ENCODE measurements at regions of chr5 and their contacts with region 1.

Region 1: DNA sequence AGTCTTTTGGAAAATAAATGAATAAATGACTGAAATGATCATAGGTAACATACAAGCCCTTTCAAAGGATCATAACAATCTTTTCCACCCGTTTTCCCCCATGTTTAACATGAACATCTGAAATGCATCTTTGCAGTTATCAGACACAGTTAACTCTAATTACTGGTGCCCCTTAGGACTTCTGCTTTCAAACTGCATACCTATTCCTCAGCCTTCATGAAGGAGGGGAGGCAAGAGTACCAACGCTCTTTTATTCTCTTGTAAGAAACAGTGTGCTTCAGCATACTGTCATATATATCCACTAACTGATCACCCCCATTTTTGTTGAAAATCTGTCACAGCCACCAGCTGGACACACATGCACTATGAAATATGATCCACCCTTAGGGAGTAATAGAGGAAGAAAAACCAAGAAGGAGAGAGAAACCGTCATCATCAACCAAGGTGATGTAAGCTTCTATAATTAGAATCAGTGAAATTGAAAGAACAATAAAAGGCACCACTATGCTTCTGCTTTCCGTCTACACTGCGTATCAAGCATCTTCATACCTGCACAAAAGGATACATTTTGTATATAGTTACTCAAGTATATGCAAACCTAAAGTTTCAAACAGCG is 98.7 kb downstream of the RAPGEF6 start:
- DNase-seq: peak in 2 of 5 donors; percentile 35 to 45
- H3K4me3 ChIP-seq: no peak overlapping the region
- H3K4me3 Mint-ChIP-seq: peak overlapping the region in 7 of 8 donors; percentile 39 to 83 (median 69)
- H3K27ac ChIP-seq: peak overlapping the region; percentile 35
- H3K27ac Mint-ChIP-seq: peak overlapping the region; percentile 66 to 96 (median 81)
- H3K4me1 ChIP-seq: peaks cover 93% of the 10 kb centered on the region
- H3K4me1 Mint-ChIP-seq: peaks cover 64 to 85% (median 73%) of the 10 kb centered on the region in 4 donors
- H3K27me3 ChIP-seq: no peaks in the 10 kb centered on the region
- H3K27me3 Mint-ChIP-seq: no peaks in the 10 kb centered on the region

Region 2: GRCh38 chr5:131514316-131515283 is 21.7 kb before region 1 on chr5:
- CTCF ChIA-PET with region 1: interaction called, 20 read pairs
- POLR2A ChIA-PET with region 1: interaction called, 39 read pairs
- intact Hi-C with region 1: loop called (anchors 1 kb)
- DNase-seq: peak; percentile 67 to 79 (median 72)
- H3K4me3 ChIP-seq: peak overlapping the region; percentile 7 to 37
- H3K4me3 Mint-ChIP-seq: peak overlapping the region; percentile 79 to 92 (median 88)
- H3K27ac ChIP-seq: peak overlapping the region; percentile 61
- H3K27ac Mint-ChIP-seq: peak overlapping the region; percentile 81 to 98 (median 93)
- H3K4me1 ChIP-seq: peaks cover 60% of the 10 kb centered on the region
- H3K4me1 Mint-ChIP-seq: peaks cover 43 to 72% (median 53%) of the 10 kb centered on the region in 4 donors
- H3K27me3 ChIP-seq: no peaks in the 10 kb centered on the region
- H3K27me3 Mint-ChIP-seq: no peaks in the 10 kb centered on the region

Region 3: DNA sequence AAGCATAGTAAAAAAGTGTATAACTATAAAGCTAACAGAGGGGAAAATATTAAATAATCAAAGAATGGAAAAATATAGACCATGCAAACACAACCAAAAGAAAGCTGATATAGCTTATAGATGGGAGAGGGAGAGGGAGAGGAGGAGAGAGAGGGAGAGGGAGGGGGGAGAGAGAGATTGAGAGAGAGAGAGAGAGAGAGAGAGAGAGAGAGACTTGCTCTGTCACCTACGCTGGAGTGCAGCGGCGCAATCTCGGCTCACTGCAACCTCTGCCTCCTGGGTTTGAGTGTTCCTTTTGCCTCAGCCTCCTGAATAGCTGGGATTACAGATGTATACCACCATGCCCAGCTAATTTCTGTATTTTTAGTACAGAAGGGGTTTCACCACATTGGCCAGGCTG is 11.9 kb before region 1 on chr5:
- CTCF ChIA-PET with region 1: interaction called, 4 read pairs
- POLR2A ChIA-PET with region 1: interaction called, 13 read pairs
- intact Hi-C with region 1: no loop called
- DNase-seq: no peak
- H3K4me3 ChIP-seq: no peak overlapping the region
- H3K4me3 Mint-ChIP-seq: peak overlapping the region in 1 of 8 donors; percentile 26
- H3K27ac ChIP-seq: no peak overlapping the region
- H3K27ac Mint-ChIP-seq: peak overlapping the region in 2 of 7 donors; percentile 8 to 12
- H3K4me1 ChIP-seq: peaks cover 68% of the 10 kb centered on the region
- H3K4me1 Mint-ChIP-seq: peaks cover 51 to 77% (median 65%) of the 10 kb centered on the region in 4 donors
- H3K27me3 ChIP-seq: no peaks in the 10 kb centered on the region
- H3K27me3 Mint-ChIP-seq: no peaks in the 10 kb centered on the region

Region 4: DNA sequence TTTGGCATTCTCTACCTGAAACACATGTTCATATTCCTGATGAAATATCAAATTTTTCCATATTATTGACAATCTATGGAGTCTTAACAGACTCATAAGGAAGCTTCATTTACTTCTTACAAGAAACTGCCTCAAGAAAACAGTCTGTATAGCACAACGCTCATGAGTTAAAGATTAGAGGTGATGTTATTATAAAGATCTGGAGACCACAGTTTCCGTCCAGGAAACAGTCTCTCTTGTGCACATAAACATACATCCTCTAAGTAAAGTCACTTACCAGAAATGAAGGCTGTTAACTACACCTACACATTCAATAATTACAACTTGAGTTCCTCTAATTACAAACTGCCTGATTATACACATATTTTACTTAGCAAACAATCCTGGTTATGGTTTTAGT is 11.9 kb after region 1 on chr5:
- CTCF ChIA-PET with region 1: interaction called, 38 read pairs
- POLR2A ChIA-PET with region 1: interaction called, 75 read pairs
- intact Hi-C with region 1: loop called (anchors 1 kb)
- DNase-seq: peak; percentile 54 to 71 (median 60)
- H3K4me3 ChIP-seq: peak overlapping the region; percentile 70 to 79
- H3K4me3 Mint-ChIP-seq: peak overlapping the region; percentile 84 to 99 (median 96)
- H3K27ac ChIP-seq: peak overlapping the region; percentile 61
- H3K27ac Mint-ChIP-seq: peak overlapping the region; percentile 89 to 97 (median 96)
- H3K4me1 ChIP-seq: peaks cover 64% of the 10 kb centered on the region
- H3K4me1 Mint-ChIP-seq: peaks cover 46 to 77% (median 57%) of the 10 kb centered on the region in 4 donors
- H3K27me3 ChIP-seq: no peaks in the 10 kb centered on the region
- H3K27me3 Mint-ChIP-seq: no peaks in the 10 kb centered on the region

Region 5: GRCh38 chr5:131634996-131635754 is 98.9 kb after region 1 on chr5 and contains the start of gene RAPGEF6:
- CTCF ChIA-PET with region 1: no interaction called
- POLR2A ChIA-PET with region 1: interaction called, 5 read pairs
- intact Hi-C with region 1: loop called (anchors 2 kb)
- DNase-seq: peak; percentile 95 to 99 (median 99)
- H3K4me3 ChIP-seq: peak within 1 kb of the TSS; percentile 79 to 98
- H3K4me3 Mint-ChIP-seq: peak within 1 kb of the TSS; percentile 92 to 99 (median 95)
- H3K27ac ChIP-seq: peak within 1 kb of the TSS; percentile 97
- H3K27ac Mint-ChIP-seq: peak within 1 kb of the TSS; percentile 97 to 100 (median 99)
- H3K4me1 ChIP-seq: peaks cover 57% of the 10 kb centered on the region
- H3K4me1 Mint-ChIP-seq: peaks cover 18 to 40% (median 25%) of the 10 kb centered on the region in 4 donors
- H3K27me3 ChIP-seq: no peaks in the 10 kb centered on the region
- H3K27me3 Mint-ChIP-seq: no peaks in the 10 kb centered on the region
- total RNA-seq, gene RAPGEF6: 114 to 121 TPM

Region 6: GRCh38 chr5:132142459-132142858 is 606.1 kb after region 1 on chr5:
- CTCF ChIA-PET with region 1: no interaction called
- POLR2A ChIA-PET with region 1: no interaction called
- intact Hi-C with region 1: no loop called
- DNase-seq: no peak
- H3K4me3 ChIP-seq: no peak overlapping the region
- H3K4me3 Mint-ChIP-seq: no peak overlapping the region
- H3K27ac ChIP-seq: no peak overlapping the region
- H3K27ac Mint-ChIP-seq: no peak overlapping the region
- H3K4me1 ChIP-seq: no peaks in the 10 kb centered on the region
- H3K4me1 Mint-ChIP-seq: no peaks in the 10 kb centered on the region
- H3K27me3 ChIP-seq: no peaks in the 10 kb centered on the region
- H3K27me3 Mint-ChIP-seq: peaks cover 3 to 6% of the 10 kb centered on the region in 2 donors

Measured in CD4-positive, alpha-beta memory T cell (primary cell).